Heart right ventricle (tissue), 16 donors: ENCODE measurements at regions of chr4 and their contacts with region 1.

Region 1: DNA sequence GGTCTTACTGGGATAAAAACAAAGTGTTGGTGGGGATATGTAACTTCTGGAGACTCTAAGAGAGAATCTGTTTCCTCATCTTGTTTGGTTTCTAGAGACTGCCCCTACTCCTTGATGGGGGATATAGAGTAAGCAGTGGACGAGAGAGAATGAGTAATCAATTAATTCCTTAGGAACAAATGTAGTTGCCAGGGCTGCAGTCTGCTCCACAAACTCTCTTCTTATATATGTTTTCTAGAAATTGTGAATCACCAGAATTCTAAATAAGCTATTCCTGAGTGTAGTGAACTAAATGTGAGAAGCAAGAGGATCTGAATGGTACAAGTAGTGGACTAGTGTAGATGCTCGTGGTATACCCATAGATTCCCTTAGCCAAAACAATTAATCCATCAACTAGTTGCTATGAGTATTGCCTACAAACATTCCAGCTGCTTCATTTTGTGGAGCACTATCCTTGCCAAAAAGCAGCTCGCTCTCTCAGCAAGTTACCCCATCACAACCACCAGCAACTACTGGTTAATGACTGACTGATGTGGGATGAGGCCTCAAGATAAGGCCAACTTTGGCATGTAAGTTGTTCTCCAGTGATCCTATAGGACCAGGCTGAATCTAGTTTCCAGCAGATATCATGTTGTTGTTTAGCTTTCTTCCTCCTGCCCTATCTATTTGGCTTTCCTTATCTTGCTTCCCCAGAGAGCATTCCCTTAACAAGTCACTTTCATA is 273.0 kb downstream of the SLC7A11 start:
- DNase-seq: no peak
- ATAC-seq: no peak
- H3K4me3 ChIP-seq: no peak overlapping the region
- H3K27ac ChIP-seq: no peak overlapping the region
- H3K4me1 ChIP-seq: no peaks in the 10 kb centered on the region
- H3K27me3 ChIP-seq: no peaks in the 10 kb centered on the region
- CTCF ChIP-seq: no peak

Region 2: DNA sequence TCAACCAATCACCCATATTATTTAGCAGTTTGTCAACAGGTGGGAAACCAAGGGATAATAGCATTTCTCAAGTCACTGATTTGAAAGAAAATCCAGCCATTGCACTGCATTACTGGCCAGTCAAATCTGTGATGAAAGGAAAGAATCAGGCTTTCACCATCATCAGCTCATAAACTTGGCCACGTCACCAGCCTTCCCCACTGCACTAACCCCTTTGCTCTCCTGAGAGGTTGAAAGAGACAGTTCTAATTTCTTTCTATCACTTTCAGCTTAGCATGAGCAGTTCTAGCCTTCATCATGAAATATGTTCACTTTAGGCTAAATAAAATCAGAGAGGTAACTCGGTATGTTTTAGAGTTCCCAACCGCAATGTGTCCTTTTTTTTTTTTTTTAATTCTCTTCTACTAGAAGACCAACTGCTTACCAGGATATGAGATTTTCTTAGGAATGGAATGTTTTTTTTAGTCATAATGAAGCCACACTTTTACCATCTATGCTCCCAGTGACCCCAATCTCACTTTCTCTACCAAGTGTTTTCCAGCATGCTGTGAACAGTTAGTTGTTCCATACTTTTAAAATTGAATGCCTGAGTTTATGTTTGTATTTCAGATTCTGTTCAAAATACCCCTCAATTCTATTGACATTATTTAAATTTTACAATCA is 328.8 kb after region 1 on chr4:
- intact Hi-C with region 1: loop called in 1 of 10 experiments (anchors 5 kb)
- DNase-seq: no peak
- ATAC-seq: no peak
- H3K4me3 ChIP-seq: no peak overlapping the region
- H3K27ac ChIP-seq: no peak overlapping the region
- H3K4me1 ChIP-seq: no peaks in the 10 kb centered on the region
- H3K27me3 ChIP-seq: no peaks in the 10 kb centered on the region
- CTCF ChIP-seq: no peak